Sigmoid colon (tissue), 7 donors: ENCODE measurements at regions of chr11 and their contacts with region 1.

Region 1: GRCh38 chr11:6362873-6363678 is 27.2 kb upstream of the SMPD1 start:
- DNase-seq: peak; percentile 90
- H3K4me3 ChIP-seq: no peak overlapping the region
- H3K27ac ChIP-seq: no peak overlapping the region
- H3K4me1 ChIP-seq: peaks cover 0 to 7% (median 2%) of the 10 kb centered on the region in 4 donors
- H3K27me3 ChIP-seq: no peaks in the 10 kb centered on the region
- CTCF ChIP-seq: peak; percentile 49 to 85 (median 64)
- EP300 ChIP-seq: no peak
- POLR2A ChIP-seq: no peak

Region 2: GRCh38 chr11:6022956-6023355 is 340.1 kb before region 1 on chr11:
- intact Hi-C with region 1: loop called (anchors 2 kb)
- DNase-seq: no peak
- H3K4me3 ChIP-seq: no peak overlapping the region
- H3K27ac ChIP-seq: no peak overlapping the region
- H3K4me1 ChIP-seq: no peaks in the 10 kb centered on the region
- H3K27me3 ChIP-seq: no peaks in the 10 kb centered on the region
- CTCF ChIP-seq: peak in 3 of 4 experiments; percentile 22 to 45 (median 42)
- EP300 ChIP-seq: no peak
- POLR2A ChIP-seq: no peak